ENCODE measurements at regions of chr1 and their contacts with region 1.

Region 1: DNA sequence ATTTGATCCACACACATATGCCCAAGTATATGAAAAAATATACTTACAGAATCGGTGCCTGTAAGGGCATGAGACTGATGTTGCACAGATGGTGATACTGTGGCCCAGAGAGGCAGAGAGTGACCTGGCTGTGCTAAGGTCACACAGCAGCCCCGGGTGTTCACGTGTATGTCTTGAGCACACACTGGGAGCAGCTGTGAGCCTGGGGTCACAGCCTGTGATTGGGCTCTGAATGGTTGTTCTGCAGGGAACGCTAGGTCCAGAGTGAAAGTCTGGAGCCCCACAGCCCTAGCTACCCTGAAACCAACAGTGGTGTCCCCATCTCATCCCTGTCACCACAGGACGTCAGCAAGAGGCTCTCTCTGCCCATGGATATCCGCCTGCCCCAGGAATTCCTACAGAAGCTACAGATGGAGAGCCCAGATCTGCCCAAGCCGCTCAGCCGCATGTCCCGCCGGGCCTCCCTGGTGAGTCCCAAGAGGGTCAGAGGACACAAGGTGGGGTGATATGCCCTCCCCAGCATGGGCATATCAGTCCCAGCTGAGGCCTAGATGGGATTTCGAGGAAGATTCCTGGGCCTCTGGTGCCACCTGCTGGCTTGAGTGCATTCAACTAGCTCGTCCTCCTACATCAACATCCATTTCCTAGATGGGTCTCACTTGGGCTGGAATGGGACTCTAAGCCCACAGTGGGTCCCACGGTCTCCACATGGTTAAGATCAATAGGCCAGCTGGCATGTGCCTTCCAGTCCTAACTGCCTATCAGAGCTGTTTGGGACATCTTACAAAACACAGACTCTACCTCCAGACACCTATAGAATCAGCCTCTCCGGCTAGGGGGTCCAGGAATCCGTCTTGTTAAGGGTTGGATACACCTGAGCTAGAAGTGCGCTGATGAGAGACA is 19.7 kb downstream of the CDK18 start:
- DNase-seq: peak; percentile 47 to 82 (median 76)
- ATAC-seq: peak; percentile 70
- H3K4me3 ChIP-seq: no peak overlapping the region
- H3K4me3 Mint-ChIP-seq: no peak overlapping the region
- H3K27ac ChIP-seq: no peak overlapping the region
- H3K27ac Mint-ChIP-seq: no peak overlapping the region
- H3K4me1 ChIP-seq: no peaks in the 10 kb centered on the region
- H3K4me1 Mint-ChIP-seq: peaks cover under 1% of the 10 kb centered on the region
- H3K27me3 ChIP-seq: no peaks in the 10 kb centered on the region
- H3K27me3 Mint-ChIP-seq: no peaks in the 10 kb centered on the region
- CTCF ChIP-seq: peak; percentile 64

Region 2: GRCh38 chr1:205273551-205273982 is 250.6 kb before region 1 on chr1:
- CTCF ChIA-PET with region 1: interaction called, 48 read pairs
- POLR2A ChIA-PET with region 1: no interaction called
- intact Hi-C with region 1: loop called (anchors 1 kb)
- DNase-seq: peak; percentile 76 to 94 (median 86)
- ATAC-seq: peak; percentile 88
- H3K4me3 ChIP-seq: peak overlapping the region in 1 of 2 experiments; percentile 44
- H3K4me3 Mint-ChIP-seq: peak overlapping the region; percentile 61
- H3K27ac ChIP-seq: no peak overlapping the region
- H3K27ac Mint-ChIP-seq: peak overlapping the region; percentile 83
- H3K4me1 ChIP-seq: peaks cover 46% of the 10 kb centered on the region
- H3K4me1 Mint-ChIP-seq: peaks cover 40% of the 10 kb centered on the region
- H3K27me3 ChIP-seq: no peaks in the 10 kb centered on the region
- H3K27me3 Mint-ChIP-seq: no peaks in the 10 kb centered on the region
- CTCF ChIP-seq: peak; percentile 95

Region 3: GRCh38 chr1:205329719-205330118 is 194.4 kb before region 1 on chr1:
- CTCF ChIA-PET with region 1: interaction called, 20 read pairs
- POLR2A ChIA-PET with region 1: no interaction called
- intact Hi-C with region 1: no loop called
- DNase-seq: no peak
- ATAC-seq: no peak
- H3K4me3 ChIP-seq: no peak overlapping the region
- H3K4me3 Mint-ChIP-seq: no peak overlapping the region
- H3K27ac ChIP-seq: no peak overlapping the region
- H3K27ac Mint-ChIP-seq: no peak overlapping the region
- H3K4me1 ChIP-seq: peaks cover 8% of the 10 kb centered on the region
- H3K4me1 Mint-ChIP-seq: peaks cover 11% of the 10 kb centered on the region
- H3K27me3 ChIP-seq: no peaks in the 10 kb centered on the region
- H3K27me3 Mint-ChIP-seq: peaks cover 3% of the 10 kb centered on the region
- CTCF ChIP-seq: no peak

Region 4: DNA sequence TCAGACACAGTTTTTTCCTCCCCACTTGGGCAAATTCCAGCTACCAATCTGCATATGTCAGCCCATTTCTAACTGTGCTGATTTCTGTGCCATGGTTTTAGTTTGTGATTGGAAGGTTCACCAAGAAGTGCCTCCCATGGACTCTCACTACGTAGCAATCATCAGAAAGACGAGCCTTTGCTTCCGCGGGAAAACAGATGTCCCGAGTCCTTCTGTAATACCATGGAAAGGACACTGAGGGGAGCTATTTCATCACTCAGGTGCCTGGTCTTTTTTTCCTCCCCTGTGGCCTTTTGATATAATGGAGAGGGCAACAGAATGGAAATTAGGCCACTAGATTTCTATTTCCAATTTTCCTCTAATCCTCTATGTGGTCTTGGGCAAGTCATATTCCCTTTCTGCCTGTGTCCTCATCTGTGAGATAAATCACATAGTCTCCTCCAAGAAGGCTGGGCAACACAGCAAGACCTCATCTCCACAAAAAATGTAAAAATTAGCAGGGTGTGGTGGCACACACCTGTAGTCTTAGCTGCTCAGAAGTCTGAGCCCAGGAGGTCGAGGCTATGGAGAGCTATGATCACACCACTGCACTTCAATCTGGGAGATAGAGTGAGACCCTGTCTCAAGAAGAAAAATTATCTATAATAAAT is 127.0 kb before region 1 on chr1:
- CTCF ChIA-PET with region 1: interaction called, 82 read pairs
- POLR2A ChIA-PET with region 1: interaction called, 3 read pairs
- intact Hi-C with region 1: loop called (anchors 1 kb)
- DNase-seq: peak in 3 of 9 experiments; percentile 8 to 70 (median 59)
- ATAC-seq: peak; percentile 74
- H3K4me3 ChIP-seq: no peak overlapping the region
- H3K4me3 Mint-ChIP-seq: no peak overlapping the region
- H3K27ac ChIP-seq: no peak overlapping the region
- H3K27ac Mint-ChIP-seq: no peak overlapping the region
- H3K4me1 ChIP-seq: no peaks in the 10 kb centered on the region
- H3K4me1 Mint-ChIP-seq: peaks cover 3% of the 10 kb centered on the region
- H3K27me3 ChIP-seq: peaks cover 0 to 5% of the 10 kb centered on the region in 2 experiments
- H3K27me3 Mint-ChIP-seq: peaks cover 13% of the 10 kb centered on the region
- CTCF ChIP-seq: peak; percentile 85

Region 5: GRCh38 chr1:205500240-205501233 is 23.6 kb before region 1 on chr1:
- CTCF ChIA-PET with region 1: interaction called, 15 read pairs
- POLR2A ChIA-PET with region 1: no interaction called
- intact Hi-C with region 1: no loop called
- DNase-seq: no peak
- ATAC-seq: no peak
- H3K4me3 ChIP-seq: no peak overlapping the region
- H3K4me3 Mint-ChIP-seq: no peak overlapping the region
- H3K27ac ChIP-seq: no peak overlapping the region
- H3K27ac Mint-ChIP-seq: no peak overlapping the region
- H3K4me1 ChIP-seq: peaks cover 12% of the 10 kb centered on the region
- H3K4me1 Mint-ChIP-seq: peaks cover 13% of the 10 kb centered on the region
- H3K27me3 ChIP-seq: peaks cover 0 to 2% of the 10 kb centered on the region in 2 experiments
- H3K27me3 Mint-ChIP-seq: no peaks in the 10 kb centered on the region
- CTCF ChIP-seq: no peak

Measured in CD8-positive, alpha-beta T cell (primary cell).